ENCODE measurements at regions of chr19 and their contacts with region 1.

Region 1: DNA sequence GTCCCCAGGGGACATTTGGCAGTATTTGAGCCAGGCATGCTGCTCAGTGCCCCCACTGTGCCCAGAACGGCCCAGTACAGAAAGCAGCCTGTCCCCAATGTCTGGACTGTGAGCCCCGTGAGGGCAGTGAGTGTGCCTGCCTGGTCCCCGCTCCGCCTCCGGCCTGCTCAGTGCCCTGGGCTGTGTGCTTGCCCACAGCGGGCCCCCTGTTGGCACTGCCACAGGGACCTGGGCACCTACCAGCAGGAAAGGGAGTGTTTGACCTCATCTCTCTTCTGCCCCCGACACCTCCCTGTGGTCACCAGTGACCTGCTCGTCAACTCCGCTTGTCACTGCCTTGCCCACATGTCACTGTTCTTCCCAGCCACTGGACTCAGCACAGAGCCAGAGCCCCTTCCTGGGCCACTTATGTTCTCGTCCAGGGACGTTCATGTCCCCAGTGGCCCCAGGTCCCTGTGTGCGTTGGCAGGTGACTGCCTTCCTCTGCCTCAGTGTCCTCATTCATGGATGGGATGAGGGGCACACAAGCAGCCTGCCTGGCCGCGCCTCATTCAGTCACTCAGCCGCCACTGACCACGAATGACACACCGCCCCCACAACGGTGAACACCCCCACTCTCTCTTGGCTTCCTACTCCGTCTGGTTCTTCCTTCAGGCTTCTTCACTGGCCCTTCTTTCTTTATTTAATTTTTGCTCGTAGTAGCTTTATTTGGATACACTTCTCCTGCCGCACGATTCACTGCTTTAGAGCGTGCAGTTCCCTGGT is 2.8 kb downstream of the FZR1 start:
- H3K4me3 ChIP-seq: no peak overlapping the region
- H3K27ac ChIP-seq: no peak overlapping the region
- H3K4me1 ChIP-seq: peaks cover 2% of the 10 kb centered on the region; the same call in 1 of the 2 replicates
- CTCF ChIP-seq: no peak

Region 2: GRCh38 chr19:3434712-3435553 is 74.0 kb before region 1 on chr19:
- CTCF ChIA-PET with region 1: no interaction called
- POLR2A ChIA-PET with region 1: no interaction called
- H3K4me3 ChIP-seq: peak overlapping the region; percentile 57
- H3K27ac ChIP-seq: peak overlapping the region; percentile 81
- H3K4me1 ChIP-seq: no peaks in the 10 kb centered on the region
- CTCF ChIP-seq: no peak

Region 3: GRCh38 chr19:3520166-3521103 is 11.5 kb after region 1 on chr19:
- CTCF ChIA-PET with region 1: no interaction called
- POLR2A ChIA-PET with region 1: no interaction called
- H3K4me3 ChIP-seq: no peak overlapping the region
- H3K27ac ChIP-seq: no peak overlapping the region
- H3K4me1 ChIP-seq: peaks cover 4% of the 10 kb centered on the region; the same call in 1 of the 2 replicates
- CTCF ChIP-seq: no peak

Region 4: GRCh38 chr19:3606690-3607289 is 97.8 kb after region 1 on chr19 and contains the start of gene TBXA2R:
- CTCF ChIA-PET with region 1: interaction called, 4 read pairs
- POLR2A ChIA-PET with region 1: interaction called, 10 read pairs
- H3K4me3 ChIP-seq: peak within 1 kb of the TSS; percentile 51
- H3K27ac ChIP-seq: no peak within 1 kb of the TSS
- H3K4me1 ChIP-seq: peaks cover 3% of the 10 kb centered on the region; the same call in 1 of the 2 replicates
- CTCF ChIP-seq: no peak